HepG2 (cell line): ENCODE measurements at regions of chr9 and their contacts with region 1.

Region 1: DNA sequence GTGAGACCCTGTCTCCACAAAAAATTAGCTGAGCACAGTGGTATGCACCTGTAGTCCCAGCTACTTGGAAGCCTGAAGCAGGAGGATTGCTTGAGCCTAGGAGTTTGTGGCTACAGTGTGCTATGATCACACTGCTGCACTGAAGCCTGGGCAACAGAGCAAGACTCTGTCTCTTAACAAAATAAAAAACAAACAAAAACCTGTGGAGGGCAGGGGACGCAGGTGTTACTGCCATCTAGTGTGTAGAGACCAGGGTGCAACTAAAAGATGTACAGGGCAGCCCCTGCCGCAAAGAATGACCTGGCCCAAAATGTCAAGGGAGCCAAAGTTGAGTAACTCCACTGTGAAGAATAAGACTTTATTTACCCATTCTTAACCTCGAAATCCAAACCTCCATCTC is 27.1 kb downstream of the ASPN start:
- DNase-seq: peak; percentile 20
- ATAC-seq: peak; percentile 84
- H3K4me3 ChIP-seq: no peak overlapping the region
- H3K27ac ChIP-seq: no peak overlapping the region
- H3K4me1 ChIP-seq: no peaks in the 10 kb centered on the region
- H3K27me3 ChIP-seq: no peaks in the 10 kb centered on the region
- CTCF ChIP-seq: peak; percentile 58
- EP300 ChIP-seq: no peak
- POLR2A ChIP-seq: no peak
- RAD21 ChIP-seq: peak; percentile 34; the same call in 1 of the 2 replicates

Region 2: DNA sequence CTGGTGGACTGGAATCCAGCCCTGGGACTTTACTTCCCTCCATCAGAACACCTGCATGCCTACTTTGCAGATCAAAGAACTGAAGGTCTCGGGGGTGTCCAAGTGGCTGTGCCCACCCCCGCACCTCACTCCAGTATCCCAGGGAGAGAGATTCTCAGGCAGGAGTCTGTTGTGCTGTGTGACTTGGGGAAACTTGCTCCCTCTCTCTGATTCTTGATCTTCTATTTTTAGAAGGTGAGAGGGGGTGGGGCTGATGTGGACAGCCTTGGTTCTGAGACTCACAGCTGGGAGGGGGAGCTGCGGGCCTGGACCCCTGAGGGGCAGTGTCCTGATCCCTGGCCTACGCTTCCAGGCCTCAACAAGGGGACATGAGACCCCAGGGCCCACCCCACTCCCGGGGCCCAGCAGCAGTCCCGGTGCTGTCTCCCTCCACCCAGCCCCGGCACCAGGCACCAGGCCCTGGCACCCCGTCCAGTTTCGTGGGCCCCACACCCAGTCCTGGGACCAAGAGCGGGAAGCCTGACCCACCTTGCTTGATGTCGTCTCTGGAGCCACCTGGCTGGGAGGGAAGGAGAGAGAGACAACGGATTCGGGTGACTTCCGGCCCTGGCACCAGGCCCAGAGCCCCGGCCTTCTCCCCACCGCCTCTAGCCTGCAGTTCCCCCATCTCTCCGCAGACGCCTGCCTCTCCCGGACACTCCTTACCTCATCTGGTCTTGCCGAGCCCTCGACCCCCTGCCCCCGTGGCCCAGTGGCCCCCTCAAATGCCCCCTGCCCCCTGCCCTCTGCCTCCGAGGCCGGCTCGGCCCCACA is 266.0 kb before region 1 on chr9:
- CTCF ChIA-PET with region 1: no interaction called
- POLR2A ChIA-PET with region 1: no interaction called
- in situ Hi-C with region 1: no loop called
- intact Hi-C with region 1: loop called (anchors 5 kb)
- DNase-seq: peak; percentile 45
- ATAC-seq: peak; percentile 86
- H3K4me3 ChIP-seq: peak overlapping the region; percentile 57 to 69 (median 59); a peak in 5 of 6 replicates
- H3K27ac ChIP-seq: no peak overlapping the region
- H3K4me1 ChIP-seq: peaks cover 30% of the 10 kb centered on the region
- H3K27me3 ChIP-seq: peaks cover 0 to 3% of the 10 kb centered on the region in 2 experiments; a peak in 2 of 5 replicates
- CTCF ChIP-seq: peak; percentile 15; the same call in 1 of the 2 replicates
- EP300 ChIP-seq: no peak
- POLR2A ChIP-seq: no peak
- RAD21 ChIP-seq: no peak

Region 3: DNA sequence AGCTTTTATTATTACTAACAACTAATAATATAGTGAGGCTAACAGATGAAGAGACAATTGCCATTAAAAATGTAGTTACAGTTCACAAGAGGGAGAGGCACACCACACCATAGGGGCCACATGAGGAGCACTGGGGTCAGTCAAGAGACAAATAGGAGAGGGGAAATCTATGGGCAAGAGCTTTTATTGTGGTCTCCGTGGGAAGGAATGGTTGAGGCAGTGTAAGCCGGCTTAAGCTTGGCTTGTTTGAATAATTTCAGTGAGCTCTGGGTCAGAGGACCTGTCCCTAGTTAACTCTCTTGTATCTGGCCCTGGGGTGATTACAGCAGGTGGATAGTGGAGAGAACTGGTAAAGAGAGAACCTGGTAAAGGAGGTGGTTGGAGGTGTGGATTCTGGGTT is 86.1 kb before region 1 on chr9:
- CTCF ChIA-PET with region 1: no interaction called
- POLR2A ChIA-PET with region 1: no interaction called
- in situ Hi-C with region 1: no loop called
- intact Hi-C with region 1: no loop called
- DNase-seq: no peak
- ATAC-seq: no peak
- H3K4me3 ChIP-seq: no peak overlapping the region
- H3K27ac ChIP-seq: no peak overlapping the region
- H3K4me1 ChIP-seq: no peaks in the 10 kb centered on the region
- H3K27me3 ChIP-seq: no peaks in the 10 kb centered on the region
- CTCF ChIP-seq: no peak
- EP300 ChIP-seq: no peak
- POLR2A ChIP-seq: no peak
- RAD21 ChIP-seq: no peak